CD8-positive, alpha-beta T cell (primary cell): ENCODE measurements at regions of chr16 and their contacts with region 1.

Region 1: GRCh38 chr16:1782352-1783091 is at the starts of genes NUBP2 and SPSB3:
- DNase-seq: peak; percentile 95 to 100 (median 98)
- ATAC-seq: peak; percentile 83
- H3K4me3 ChIP-seq: peak within 1 kb of the TSS; percentile 81 to 83
- H3K4me3 Mint-ChIP-seq: peak within 1 kb of the TSS; percentile 90
- H3K27ac ChIP-seq: peak within 1 kb of the TSS; percentile 73 to 86
- H3K27ac Mint-ChIP-seq: peak within 1 kb of the TSS; percentile 95
- H3K4me1 ChIP-seq: peaks cover 38% of the 10 kb centered on the region
- H3K4me1 Mint-ChIP-seq: peaks cover 29% of the 10 kb centered on the region
- H3K27me3 ChIP-seq: no peaks in the 10 kb centered on the region
- H3K27me3 Mint-ChIP-seq: no peaks in the 10 kb centered on the region
- CTCF ChIP-seq: no peak
- total RNA-seq, gene NUBP2: 33.1 to 39.2 TPM
- total RNA-seq, gene SPSB3: 70.3 to 72.3 TPM

Region 2: GRCh38 chr16:1420111-1420540 is 362.4 kb before region 1 on chr16:
- CTCF ChIA-PET with region 1: no interaction called
- POLR2A ChIA-PET with region 1: interaction called, 8 read pairs
- intact Hi-C with region 1: loop called (anchors 1 to 2 kb)
- DNase-seq: peak in 1 of 9 experiments; percentile 16
- ATAC-seq: no peak
- H3K4me3 ChIP-seq: peak overlapping the region; percentile 85 to 95
- H3K4me3 Mint-ChIP-seq: peak overlapping the region; percentile 92
- H3K27ac ChIP-seq: peak overlapping the region; percentile 81 to 98
- H3K27ac Mint-ChIP-seq: peak overlapping the region; percentile 76
- H3K4me1 ChIP-seq: peaks cover 19% of the 10 kb centered on the region
- H3K4me1 Mint-ChIP-seq: peaks cover 29% of the 10 kb centered on the region
- H3K27me3 ChIP-seq: no peaks in the 10 kb centered on the region
- H3K27me3 Mint-ChIP-seq: no peaks in the 10 kb centered on the region
- CTCF ChIP-seq: no peak

Region 3: GRCh38 chr16:1705688-1706385 is 76.7 kb before region 1 on chr16 and contains the start of gene MAPK8IP3:
- CTCF ChIA-PET with region 1: no interaction called
- POLR2A ChIA-PET with region 1: interaction called, 9 read pairs
- intact Hi-C with region 1: loop called (anchors 1 kb)
- DNase-seq: peak; percentile 88 to 99 (median 95)
- ATAC-seq: peak; percentile 74
- H3K4me3 ChIP-seq: peak within 1 kb of the TSS; percentile 94 to 99
- H3K4me3 Mint-ChIP-seq: peak within 1 kb of the TSS; percentile 99
- H3K27ac ChIP-seq: peak within 1 kb of the TSS; percentile 83 to 90
- H3K27ac Mint-ChIP-seq: peak within 1 kb of the TSS; percentile 97
- H3K4me1 ChIP-seq: peaks cover 32% of the 10 kb centered on the region
- H3K4me1 Mint-ChIP-seq: peaks cover 43% of the 10 kb centered on the region
- H3K27me3 ChIP-seq: no peaks in the 10 kb centered on the region
- H3K27me3 Mint-ChIP-seq: no peaks in the 10 kb centered on the region
- CTCF ChIP-seq: peak; percentile 92
- total RNA-seq, gene MAPK8IP3: 381 to 419 TPM

Region 4: GRCh38 chr16:1942810-1943726 is 160.5 kb after region 1 on chr16 and contains the start of gene MSRB1:
- CTCF ChIA-PET with region 1: no interaction called
- POLR2A ChIA-PET with region 1: no interaction called
- intact Hi-C with region 1: loop called in 1 of 2 experiments (anchors 5 kb)
- DNase-seq: peak; percentile 96 to 100 (median 99)
- ATAC-seq: peak; percentile 99
- H3K4me3 ChIP-seq: peak within 1 kb of the TSS; percentile 83 to 94
- H3K4me3 Mint-ChIP-seq: peak within 1 kb of the TSS; percentile 85
- H3K27ac ChIP-seq: peak within 1 kb of the TSS in 1 of 2 experiments; percentile 62
- H3K27ac Mint-ChIP-seq: peak within 1 kb of the TSS; percentile 55
- H3K4me1 ChIP-seq: peaks cover 13% of the 10 kb centered on the region
- H3K4me1 Mint-ChIP-seq: peaks cover 11% of the 10 kb centered on the region
- H3K27me3 ChIP-seq: no peaks in the 10 kb centered on the region
- H3K27me3 Mint-ChIP-seq: no peaks in the 10 kb centered on the region
- CTCF ChIP-seq: no peak
- total RNA-seq, gene MSRB1: 1.9 to 3.0 TPM

Region 5: GRCh38 chr16:1971796-1972489 is 189.4 kb after region 1 on chr16 and contains the start of gene TBL3:
- CTCF ChIA-PET with region 1: no interaction called
- POLR2A ChIA-PET with region 1: interaction called, 10 read pairs
- intact Hi-C with region 1: loop called in 1 of 2 experiments (anchors 1 kb)
- DNase-seq: peak; percentile 91 to 99 (median 97)
- ATAC-seq: peak; percentile 96
- H3K4me3 ChIP-seq: peak within 1 kb of the TSS; percentile 76 to 91
- H3K4me3 Mint-ChIP-seq: peak within 1 kb of the TSS; percentile 93
- H3K27ac ChIP-seq: peak within 1 kb of the TSS; percentile 86 to 94
- H3K27ac Mint-ChIP-seq: peak within 1 kb of the TSS; percentile 97
- H3K4me1 ChIP-seq: peaks cover 17% of the 10 kb centered on the region
- H3K4me1 Mint-ChIP-seq: peaks cover 16% of the 10 kb centered on the region
- H3K27me3 ChIP-seq: no peaks in the 10 kb centered on the region
- H3K27me3 Mint-ChIP-seq: no peaks in the 10 kb centered on the region
- CTCF ChIP-seq: no peak
- total RNA-seq, gene TBL3: 15.4 to 16.6 TPM

Region 6: DNA sequence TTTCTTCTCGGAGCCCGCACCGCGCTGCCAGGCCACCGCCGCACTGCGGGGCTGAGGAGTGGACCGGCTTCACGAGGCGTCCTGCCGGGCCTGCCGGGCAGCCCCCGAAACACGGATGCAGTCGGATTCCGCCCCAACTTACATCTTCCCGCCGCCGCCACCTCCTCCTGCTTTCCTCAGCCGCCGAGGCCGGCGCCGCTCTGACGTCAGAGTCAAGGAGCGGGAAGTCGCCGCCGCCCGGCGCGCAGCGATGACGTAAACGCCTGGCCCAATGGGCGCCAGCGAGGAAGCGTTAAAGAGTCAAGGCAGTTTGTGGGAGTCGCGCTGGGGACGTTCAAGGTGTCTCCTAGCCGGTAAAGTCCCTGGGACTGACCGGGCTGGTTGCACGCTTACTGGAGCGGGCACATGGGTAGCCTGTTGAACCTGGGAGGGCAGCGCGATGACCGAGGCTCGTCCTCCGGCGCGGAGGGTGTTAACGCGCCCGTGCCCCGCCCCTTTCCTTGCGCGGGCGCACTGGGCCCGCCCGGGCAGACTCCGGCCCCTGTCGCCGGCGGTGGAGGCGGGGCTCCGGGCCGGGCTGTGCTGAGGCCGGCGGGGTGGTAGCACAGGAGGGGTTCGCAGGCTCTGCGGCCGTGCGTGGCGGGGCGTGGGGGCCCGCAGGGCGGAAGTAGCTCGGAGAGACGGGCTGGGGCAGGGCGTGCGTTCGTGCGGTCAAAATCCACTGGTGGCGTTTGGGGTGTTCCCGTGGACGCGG is 485.6 kb after region 1 on chr16 and contains the start of gene RNPS1:
- CTCF ChIA-PET with region 1: no interaction called
- POLR2A ChIA-PET with region 1: no interaction called
- intact Hi-C with region 1: loop called in 1 of 2 experiments (anchors 5 kb)
- DNase-seq: peak; percentile 90 to 99 (median 97)
- ATAC-seq: peak; percentile 81
- H3K4me3 ChIP-seq: peak within 1 kb of the TSS; percentile 94 to 100
- H3K4me3 Mint-ChIP-seq: peak within 1 kb of the TSS; percentile 96
- H3K27ac ChIP-seq: peak within 1 kb of the TSS; percentile 96 to 99
- H3K27ac Mint-ChIP-seq: peak within 1 kb of the TSS; percentile 97
- H3K4me1 ChIP-seq: peaks cover 30% of the 10 kb centered on the region
- H3K4me1 Mint-ChIP-seq: peaks cover 34% of the 10 kb centered on the region
- H3K27me3 ChIP-seq: no peaks in the 10 kb centered on the region
- H3K27me3 Mint-ChIP-seq: no peaks in the 10 kb centered on the region
- CTCF ChIP-seq: no peak
- total RNA-seq, gene RNPS1: 239 to 246 TPM

Region 7: DNA sequence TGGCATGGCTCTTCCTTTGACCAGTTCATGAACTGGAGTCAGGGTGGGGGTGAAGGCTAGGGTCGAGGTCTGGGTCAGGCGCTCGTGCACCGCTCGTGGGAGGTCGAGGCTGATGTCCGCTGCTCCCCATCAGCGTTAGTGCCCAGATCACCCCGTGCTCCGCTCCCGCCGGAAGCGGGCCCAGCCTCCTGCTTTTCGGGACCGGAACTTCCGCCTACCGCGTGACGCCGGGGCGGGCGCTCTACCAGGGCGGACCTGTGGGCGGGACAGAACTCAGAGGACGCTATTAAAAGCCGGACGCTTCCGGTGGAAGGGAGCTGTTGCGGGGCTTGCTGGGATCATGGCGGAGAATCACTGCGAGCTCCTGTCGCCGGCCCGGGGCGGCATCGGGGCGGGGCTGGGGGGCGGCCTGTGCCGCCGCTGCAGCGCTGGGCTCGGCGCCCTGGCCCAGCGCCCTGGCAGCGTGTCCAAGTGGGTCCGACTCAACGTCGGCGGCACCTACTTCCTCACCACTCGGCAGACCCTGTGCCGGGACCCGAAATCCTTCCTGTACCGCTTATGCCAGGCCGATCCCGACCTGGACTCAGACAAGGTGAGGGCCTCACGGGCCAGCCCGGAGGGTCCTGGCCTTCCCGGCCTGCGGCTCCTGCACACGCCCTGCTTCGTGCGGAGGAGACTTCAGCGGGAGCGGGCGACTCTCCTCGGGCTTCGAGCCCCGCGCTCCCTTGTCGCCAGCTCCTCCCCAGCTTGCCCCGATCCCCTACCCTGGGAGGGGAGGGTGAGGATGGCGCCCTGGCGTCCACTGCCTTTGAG is 899.9 kb after region 1 on chr16 and contains the start of gene KCTD5:
- CTCF ChIA-PET with region 1: no interaction called
- POLR2A ChIA-PET with region 1: no interaction called
- intact Hi-C with region 1: loop called in 1 of 2 experiments (anchors 5 kb)
- DNase-seq: peak; percentile 91 to 98 (median 96)
- ATAC-seq: peak; percentile 96
- H3K4me3 ChIP-seq: peak within 1 kb of the TSS; percentile 98 to 99
- H3K4me3 Mint-ChIP-seq: peak within 1 kb of the TSS; percentile 94
- H3K27ac ChIP-seq: peak within 1 kb of the TSS; percentile 73 to 85
- H3K27ac Mint-ChIP-seq: peak within 1 kb of the TSS; percentile 96
- H3K4me1 ChIP-seq: peaks cover 19% of the 10 kb centered on the region
- H3K4me1 Mint-ChIP-seq: peaks cover 32% of the 10 kb centered on the region
- H3K27me3 ChIP-seq: no peaks in the 10 kb centered on the region
- H3K27me3 Mint-ChIP-seq: no peaks in the 10 kb centered on the region
- CTCF ChIP-seq: no peak
- total RNA-seq, gene KCTD5: 34.2 to 36.0 TPM